CD8-positive, alpha-beta T cell (primary cell): ENCODE measurements at regions of chr3 and their contacts with region 1.

Region 1: GRCh38 chr3:47824541-47825473 is 21.9 kb downstream of the DHX30 start:
- DNase-seq: peak; percentile 59 to 91 (median 75)
- ATAC-seq: peak; percentile 98
- H3K4me3 ChIP-seq: peak overlapping the region; percentile 67 to 95
- H3K4me3 Mint-ChIP-seq: peak overlapping the region; percentile 88
- H3K27ac ChIP-seq: peak overlapping the region; percentile 67 to 72
- H3K27ac Mint-ChIP-seq: peak overlapping the region; percentile 93
- H3K4me1 ChIP-seq: peaks cover 17% of the 10 kb centered on the region
- H3K4me1 Mint-ChIP-seq: peaks cover 32% of the 10 kb centered on the region
- H3K27me3 ChIP-seq: no peaks in the 10 kb centered on the region
- H3K27me3 Mint-ChIP-seq: no peaks in the 10 kb centered on the region
- CTCF ChIP-seq: peak; percentile 74

Region 2: GRCh38 chr3:47475570-47476329 is 349.1 kb before region 1 on chr3 and contains the start of gene SCAP:
- CTCF ChIA-PET with region 1: no interaction called
- POLR2A ChIA-PET with region 1: no interaction called
- intact Hi-C with region 1: loop called in 1 of 2 experiments (anchors 1 kb)
- DNase-seq: peak; percentile 90 to 98 (median 96)
- ATAC-seq: peak; percentile 90
- H3K4me3 ChIP-seq: peak within 1 kb of the TSS; percentile 58 to 83
- H3K4me3 Mint-ChIP-seq: peak within 1 kb of the TSS; percentile 93
- H3K27ac ChIP-seq: peak within 1 kb of the TSS; percentile 69 to 86
- H3K27ac Mint-ChIP-seq: peak within 1 kb of the TSS; percentile 94
- H3K4me1 ChIP-seq: peaks cover 28% of the 10 kb centered on the region
- H3K4me1 Mint-ChIP-seq: peaks cover 43% of the 10 kb centered on the region
- H3K27me3 ChIP-seq: no peaks in the 10 kb centered on the region
- H3K27me3 Mint-ChIP-seq: no peaks in the 10 kb centered on the region
- CTCF ChIP-seq: peak; percentile 97
- total RNA-seq, gene SCAP: 72.8 to 76.6 TPM

Region 3: DNA sequence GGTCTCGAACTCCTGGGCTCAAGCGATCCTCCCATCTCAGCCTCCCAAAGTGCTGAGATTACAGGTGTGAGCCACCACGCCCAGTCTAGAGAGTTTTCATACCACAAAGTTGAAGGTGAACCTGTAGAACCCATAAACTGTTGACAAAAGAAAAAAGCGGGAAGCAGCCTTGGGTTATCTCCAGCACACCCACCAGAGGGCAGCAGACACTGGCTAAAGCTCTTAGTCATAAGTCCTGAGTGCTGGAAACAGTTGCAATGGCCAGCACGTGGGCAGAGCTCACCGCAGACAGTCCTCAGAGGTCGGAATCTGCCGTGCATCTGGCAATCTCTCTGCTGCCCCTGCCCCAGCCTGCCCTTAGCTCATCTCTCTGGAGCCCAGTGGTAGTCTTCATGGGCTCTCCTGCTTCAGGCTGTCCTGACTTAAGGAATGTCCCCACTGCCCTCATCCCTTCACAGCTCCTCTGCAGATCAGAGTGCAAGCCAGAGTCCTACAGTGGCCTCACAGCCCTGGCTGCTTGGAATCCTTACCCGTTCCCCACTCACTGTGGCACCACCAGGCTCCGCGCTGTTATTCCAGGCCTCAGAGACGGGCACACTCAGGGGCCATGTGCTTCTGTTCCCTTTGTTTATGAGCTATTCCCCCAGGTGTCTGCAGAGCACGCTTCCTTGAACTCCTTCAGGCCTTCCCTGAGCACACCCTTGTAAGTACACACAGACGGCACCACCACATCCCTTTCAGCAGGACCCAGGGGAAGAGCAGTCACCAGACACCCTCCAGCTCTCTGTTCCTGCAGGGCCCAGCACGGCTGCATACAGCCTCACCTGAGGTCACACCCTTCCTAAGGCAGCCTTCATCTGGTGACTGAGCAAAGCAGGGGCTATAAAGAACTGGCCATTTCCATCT is 302.5 kb before region 1 on chr3:
- CTCF ChIA-PET with region 1: interaction called, 19 read pairs
- POLR2A ChIA-PET with region 1: interaction called, 5 read pairs
- intact Hi-C with region 1: loop called in 1 of 2 experiments (anchors 1 kb)
- DNase-seq: peak; percentile 47 to 85 (median 71)
- ATAC-seq: peak; percentile 90
- H3K4me3 ChIP-seq: no peak overlapping the region
- H3K4me3 Mint-ChIP-seq: no peak overlapping the region
- H3K27ac ChIP-seq: no peak overlapping the region
- H3K27ac Mint-ChIP-seq: no peak overlapping the region
- H3K4me1 ChIP-seq: no peaks in the 10 kb centered on the region
- H3K4me1 Mint-ChIP-seq: no peaks in the 10 kb centered on the region
- H3K27me3 ChIP-seq: no peaks in the 10 kb centered on the region
- H3K27me3 Mint-ChIP-seq: no peaks in the 10 kb centered on the region
- CTCF ChIP-seq: peak; percentile 66

Region 4: GRCh38 chr3:47605652-47606051 is 219.2 kb before region 1 on chr3:
- CTCF ChIA-PET with region 1: no interaction called
- POLR2A ChIA-PET with region 1: no interaction called
- intact Hi-C with region 1: no loop called
- DNase-seq: no peak
- ATAC-seq: no peak
- H3K4me3 ChIP-seq: no peak overlapping the region
- H3K4me3 Mint-ChIP-seq: no peak overlapping the region
- H3K27ac ChIP-seq: no peak overlapping the region
- H3K27ac Mint-ChIP-seq: no peak overlapping the region
- H3K4me1 ChIP-seq: no peaks in the 10 kb centered on the region
- H3K4me1 Mint-ChIP-seq: no peaks in the 10 kb centered on the region
- H3K27me3 ChIP-seq: no peaks in the 10 kb centered on the region
- H3K27me3 Mint-ChIP-seq: no peaks in the 10 kb centered on the region
- CTCF ChIP-seq: no peak

Region 5: DNA sequence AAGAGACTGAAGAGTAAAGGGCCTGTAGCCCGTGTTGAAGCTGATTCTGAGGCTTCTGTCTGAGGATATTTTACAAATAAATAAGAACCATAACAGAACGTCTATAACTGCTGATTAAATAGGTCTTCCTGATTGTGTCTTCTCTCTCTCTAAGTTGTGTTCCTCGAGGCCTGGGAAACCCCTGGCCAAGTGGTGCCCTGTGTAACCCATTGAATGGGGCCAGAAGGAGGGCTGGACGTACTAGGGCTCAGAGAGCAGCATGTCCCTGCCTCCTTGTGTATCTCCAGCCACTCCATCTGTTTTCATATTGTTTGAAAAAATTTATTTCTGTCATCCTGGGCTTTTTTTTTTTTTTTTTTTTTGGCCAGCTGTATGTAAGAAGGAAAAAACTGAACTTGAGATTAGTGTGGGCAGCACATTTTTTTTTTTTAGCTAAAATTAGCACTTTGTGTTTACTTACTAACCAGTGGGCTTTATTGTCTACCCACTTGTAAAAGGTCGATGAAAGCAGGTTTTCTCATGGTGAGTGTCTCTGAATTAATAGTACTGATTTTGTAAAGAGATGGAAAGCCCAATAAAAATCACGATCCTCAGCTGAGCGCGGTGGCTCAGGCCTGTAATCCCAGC is 11.1 kb before region 1 on chr3:
- CTCF ChIA-PET with region 1: interaction called, 15 read pairs
- POLR2A ChIA-PET with region 1: no interaction called
- intact Hi-C with region 1: no loop called
- DNase-seq: no peak
- ATAC-seq: no peak
- H3K4me3 ChIP-seq: no peak overlapping the region
- H3K4me3 Mint-ChIP-seq: no peak overlapping the region
- H3K27ac ChIP-seq: no peak overlapping the region
- H3K27ac Mint-ChIP-seq: no peak overlapping the region
- H3K4me1 ChIP-seq: no peaks in the 10 kb centered on the region
- H3K4me1 Mint-ChIP-seq: peaks cover 6% of the 10 kb centered on the region
- H3K27me3 ChIP-seq: no peaks in the 10 kb centered on the region
- H3K27me3 Mint-ChIP-seq: no peaks in the 10 kb centered on the region
- CTCF ChIP-seq: no peak

Region 6: GRCh38 chr3:47989981-47990440 is 165.2 kb after region 1 on chr3:
- CTCF ChIA-PET with region 1: interaction called, 47 read pairs
- POLR2A ChIA-PET with region 1: interaction called, 7 read pairs
- intact Hi-C with region 1: loop called (anchors 1 kb)
- DNase-seq: peak; percentile 27 to 84 (median 69)
- ATAC-seq: peak; percentile 97
- H3K4me3 ChIP-seq: no peak overlapping the region
- H3K4me3 Mint-ChIP-seq: no peak overlapping the region
- H3K27ac ChIP-seq: no peak overlapping the region
- H3K27ac Mint-ChIP-seq: no peak overlapping the region
- H3K4me1 ChIP-seq: no peaks in the 10 kb centered on the region
- H3K4me1 Mint-ChIP-seq: peaks cover 1% of the 10 kb centered on the region
- H3K27me3 ChIP-seq: no peaks in the 10 kb centered on the region
- H3K27me3 Mint-ChIP-seq: no peaks in the 10 kb centered on the region
- CTCF ChIP-seq: peak; percentile 85

Region 7: DNA sequence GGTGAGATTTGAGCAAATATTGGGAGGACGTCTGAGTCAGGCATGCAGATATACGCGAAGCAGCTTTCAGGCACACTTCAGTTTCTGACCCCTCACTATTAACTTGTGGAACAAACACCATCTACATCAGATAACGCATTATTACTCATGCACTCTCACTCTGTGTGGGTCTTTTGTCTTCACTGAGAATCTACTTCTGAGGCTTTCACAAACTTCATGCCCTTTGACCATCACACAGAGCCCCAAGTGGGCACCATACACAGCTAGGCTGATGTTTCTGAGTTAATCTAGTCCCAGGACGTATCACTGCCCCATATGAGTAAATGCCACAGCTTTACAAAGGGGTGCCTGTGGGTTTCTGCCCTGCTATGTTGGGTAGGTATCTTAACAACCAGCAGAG is 931.8 kb after region 1 on chr3:
- CTCF ChIA-PET with region 1: no interaction called
- POLR2A ChIA-PET with region 1: no interaction called
- intact Hi-C with region 1: no loop called
- DNase-seq: no peak
- ATAC-seq: no peak
- H3K4me3 ChIP-seq: no peak overlapping the region
- H3K4me3 Mint-ChIP-seq: no peak overlapping the region
- H3K27ac ChIP-seq: no peak overlapping the region
- H3K27ac Mint-ChIP-seq: peak overlapping the region; percentile 4
- H3K4me1 ChIP-seq: no peaks in the 10 kb centered on the region
- H3K4me1 Mint-ChIP-seq: no peaks in the 10 kb centered on the region
- H3K27me3 ChIP-seq: no peaks in the 10 kb centered on the region
- H3K27me3 Mint-ChIP-seq: no peaks in the 10 kb centered on the region
- CTCF ChIP-seq: no peak